Colonic mucosa (tissue), 4 donors: ENCODE measurements at regions of chr16 and their contacts with region 1.

Region 1: GRCh38 chr16:52191531-52192134 is 355.3 kb downstream of the TOX3 start:
- DNase-seq: peak; percentile 78
- H3K4me3 ChIP-seq: no peak overlapping the region
- H3K27ac ChIP-seq: no peak overlapping the region
- H3K4me1 ChIP-seq: no peaks in the 10 kb centered on the region
- H3K27me3 ChIP-seq: no peaks in the 10 kb centered on the region
- CTCF ChIP-seq: peak; percentile 87

Region 2: DNA sequence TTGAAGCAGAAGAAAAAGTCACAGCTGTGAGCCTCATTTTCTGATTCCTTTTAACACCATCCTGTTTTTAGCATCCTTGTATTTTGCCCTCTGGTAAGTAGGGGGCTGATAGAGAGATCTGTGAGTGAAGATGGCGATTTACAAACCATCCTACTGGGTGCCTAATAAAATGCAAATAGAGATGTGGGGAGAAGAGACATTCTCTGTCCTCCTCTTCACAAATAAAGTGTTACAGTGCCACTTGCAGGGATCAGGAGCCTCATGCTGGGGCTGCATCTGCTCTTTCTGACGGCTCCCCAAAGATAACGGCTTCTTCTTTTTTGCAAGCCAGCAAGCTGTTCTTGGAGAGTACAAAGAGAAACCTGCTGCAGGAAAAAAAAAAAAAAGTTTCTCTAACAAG is 63.3 kb before region 1 on chr16:
- intact Hi-C with region 1: no loop called
- DNase-seq: no peak
- H3K4me3 ChIP-seq: no peak overlapping the region
- H3K27ac ChIP-seq: no peak overlapping the region
- H3K4me1 ChIP-seq: no peaks in the 10 kb centered on the region
- H3K27me3 ChIP-seq: no peaks in the 10 kb centered on the region
- CTCF ChIP-seq: no peak

Region 3: DNA sequence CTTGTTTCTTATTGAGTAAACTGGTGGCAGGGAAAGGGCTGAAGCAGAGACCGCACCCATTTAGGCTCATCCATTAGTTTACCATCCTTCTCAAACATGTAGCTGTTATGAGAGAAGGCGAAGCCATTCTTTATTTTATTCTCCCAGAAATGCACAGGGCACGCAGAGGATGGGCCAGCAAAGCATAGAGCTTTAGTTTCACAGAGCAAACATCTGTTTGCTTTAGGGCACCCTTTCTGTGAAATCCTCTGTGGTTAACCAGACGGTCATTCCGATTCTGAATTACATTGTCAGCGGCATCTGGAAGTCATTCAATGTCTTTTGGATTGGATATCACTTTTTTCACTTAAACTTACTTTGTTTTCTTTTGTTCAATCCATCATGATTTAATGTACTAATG is 259.3 kb after region 1 on chr16:
- intact Hi-C with region 1: loop called (anchors 5 kb)
- DNase-seq: no peak
- H3K4me3 ChIP-seq: no peak overlapping the region
- H3K27ac ChIP-seq: no peak overlapping the region
- H3K4me1 ChIP-seq: no peaks in the 10 kb centered on the region
- H3K27me3 ChIP-seq: no peaks in the 10 kb centered on the region
- CTCF ChIP-seq: no peak

Region 4: DNA sequence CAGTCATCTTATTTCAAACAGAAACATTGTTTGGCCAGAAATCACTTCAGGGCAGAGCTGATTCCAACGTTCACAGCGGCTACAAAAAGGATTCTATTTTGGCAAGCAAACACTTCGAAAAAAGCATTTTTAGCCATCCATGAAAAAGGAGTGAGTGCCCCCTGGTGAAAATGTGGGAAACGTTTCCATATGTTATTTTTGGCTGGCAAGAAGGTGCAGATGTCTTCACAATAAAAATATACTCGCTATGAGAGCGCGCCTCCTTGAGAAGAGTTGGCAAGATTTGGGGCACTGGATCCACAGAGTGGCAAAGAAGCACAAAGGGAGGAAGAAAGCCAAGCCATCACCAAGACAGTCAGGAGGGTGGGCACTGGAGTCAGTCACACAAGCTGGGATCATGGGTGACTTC is 670.0 kb after region 1 on chr16:
- intact Hi-C with region 1: loop called (anchors 2 kb)
- DNase-seq: peak; percentile 44
- H3K4me3 ChIP-seq: no peak overlapping the region
- H3K27ac ChIP-seq: no peak overlapping the region
- H3K4me1 ChIP-seq: no peaks in the 10 kb centered on the region
- H3K27me3 ChIP-seq: no peaks in the 10 kb centered on the region
- CTCF ChIP-seq: peak; percentile 18

Region 5: GRCh38 chr16:52912565-52913173 is 721.0 kb after region 1 on chr16:
- intact Hi-C with region 1: loop called (anchors 2 kb)
- DNase-seq: peak; percentile 81
- H3K4me3 ChIP-seq: no peak overlapping the region
- H3K27ac ChIP-seq: no peak overlapping the region
- H3K4me1 ChIP-seq: no peaks in the 10 kb centered on the region
- H3K27me3 ChIP-seq: no peaks in the 10 kb centered on the region
- CTCF ChIP-seq: peak; percentile 78